Activated B cell treated with CpG ODN at 0.5 μM for 24 hours (primary cell): ENCODE measurements at regions of chr12 and their contacts with region 1.

Region 1: DNA sequence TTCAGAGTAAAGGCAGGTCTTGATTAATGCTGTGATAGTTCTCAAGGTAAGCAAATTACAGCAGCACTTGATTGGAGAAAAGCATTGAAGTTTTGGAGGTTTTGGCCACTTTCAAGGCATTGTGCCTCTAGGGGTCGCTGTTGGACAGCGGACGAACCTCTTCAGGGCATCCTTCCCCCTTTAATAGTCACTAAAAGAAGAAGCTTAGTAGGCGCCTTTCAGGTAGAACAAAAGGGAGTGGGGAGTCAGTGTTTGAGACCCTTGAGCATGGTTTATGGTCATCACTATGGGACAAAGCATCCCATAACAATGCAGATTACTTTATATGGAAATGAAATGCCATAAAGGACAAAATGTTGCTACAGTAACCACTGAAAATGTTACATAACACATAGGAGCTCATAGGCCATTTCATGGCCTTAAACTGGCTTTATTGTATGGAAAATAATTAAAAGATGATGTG is 199.5 kb upstream of the DCN start:
- DNase-seq: peak; percentile 63
- ATAC-seq: peak; percentile 78
- H3K4me3 Mint-ChIP-seq: peak overlapping the region; percentile 76
- H3K27ac Mint-ChIP-seq: peak overlapping the region; percentile 35
- H3K4me1 Mint-ChIP-seq: peaks cover 4% of the 10 kb centered on the region
- H3K27me3 Mint-ChIP-seq: no peaks in the 10 kb centered on the region
- CTCF ChIP-seq: peak; percentile 62

Region 2: DNA sequence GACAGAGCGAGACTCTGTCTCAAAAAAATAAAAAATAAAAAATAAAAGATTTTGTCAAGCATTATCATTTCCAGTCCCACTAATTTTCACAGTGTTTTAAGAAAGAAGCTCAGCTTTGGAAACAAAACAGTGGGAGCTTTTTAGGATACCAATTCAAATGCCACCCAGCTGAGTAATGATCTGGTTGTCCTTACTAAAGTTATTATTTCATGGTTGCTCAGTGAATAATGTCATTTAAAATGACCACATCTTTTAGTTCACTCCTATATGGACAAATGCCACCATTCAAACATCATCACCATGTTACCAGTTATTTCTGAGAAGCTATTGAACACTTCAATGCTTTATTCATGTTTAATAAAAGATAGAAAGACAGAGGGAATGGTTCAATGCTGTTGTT is 792.2 kb before region 1 on chr12:
- CTCF ChIA-PET with region 1: no interaction called
- POLR2A ChIA-PET with region 1: no interaction called
- intact Hi-C with region 1: no loop called
- DNase-seq: no peak
- ATAC-seq: no peak
- H3K4me3 Mint-ChIP-seq: no peak overlapping the region
- H3K27ac Mint-ChIP-seq: no peak overlapping the region
- H3K4me1 Mint-ChIP-seq: no peaks in the 10 kb centered on the region
- H3K27me3 Mint-ChIP-seq: no peaks in the 10 kb centered on the region
- CTCF ChIP-seq: no peak

Region 3: GRCh38 chr12:91396293-91396692 is 14.2 kb after region 1 on chr12:
- CTCF ChIA-PET with region 1: interaction called, 11 read pairs
- POLR2A ChIA-PET with region 1: no interaction called
- intact Hi-C with region 1: no loop called
- DNase-seq: no peak
- ATAC-seq: no peak
- H3K4me3 Mint-ChIP-seq: no peak overlapping the region
- H3K27ac Mint-ChIP-seq: no peak overlapping the region
- H3K4me1 Mint-ChIP-seq: no peaks in the 10 kb centered on the region
- H3K27me3 Mint-ChIP-seq: peaks cover 20% of the 10 kb centered on the region
- CTCF ChIP-seq: no peak

Region 4: DNA sequence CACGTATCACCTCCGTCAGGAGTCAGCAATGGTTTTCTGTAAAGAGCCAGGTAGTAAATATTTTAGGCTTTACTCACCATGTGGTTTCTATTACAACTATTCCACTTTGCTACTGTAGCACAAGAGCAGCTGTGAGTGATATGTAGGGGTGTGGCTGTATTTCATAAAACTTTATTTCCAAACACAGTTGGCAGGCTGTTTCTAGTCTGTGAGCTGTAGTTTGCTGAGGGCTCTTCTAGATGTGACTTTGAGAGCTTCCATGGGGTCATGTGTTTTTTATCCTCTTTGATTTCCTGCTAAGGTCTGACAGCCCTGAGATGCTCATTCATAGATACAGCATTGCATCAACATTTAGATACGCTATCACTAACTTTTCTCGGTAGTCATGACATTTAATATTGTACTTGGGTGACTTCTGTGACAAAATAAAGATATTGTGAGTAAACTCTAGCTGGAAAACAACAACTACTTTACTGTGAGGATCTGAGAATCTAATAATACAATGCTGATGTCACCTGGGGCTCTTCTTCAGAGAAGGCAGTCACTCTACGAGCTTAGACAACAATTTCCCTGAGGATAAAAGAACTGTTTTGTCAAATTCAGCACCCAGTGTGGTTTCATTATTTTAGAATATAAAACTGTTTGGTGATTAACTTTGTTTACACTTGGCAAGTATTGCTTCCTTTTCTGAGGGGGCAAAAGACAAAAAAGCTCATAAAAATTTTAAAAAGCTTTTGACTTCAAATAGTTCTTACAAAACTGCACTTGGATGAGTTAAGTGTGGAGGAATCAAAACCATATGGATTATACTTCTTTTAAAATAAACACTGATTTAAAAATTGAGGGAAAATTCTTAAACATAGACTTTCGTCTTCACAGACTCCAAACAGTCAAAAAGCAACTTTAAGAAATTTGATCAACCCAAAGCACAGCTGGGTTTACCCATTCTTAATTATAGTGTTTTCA is 31.8 kb after region 1 on chr12:
- CTCF ChIA-PET with region 1: no interaction called
- POLR2A ChIA-PET with region 1: no interaction called
- intact Hi-C with region 1: no loop called
- DNase-seq: no peak
- ATAC-seq: no peak
- H3K4me3 Mint-ChIP-seq: no peak overlapping the region
- H3K27ac Mint-ChIP-seq: no peak overlapping the region
- H3K4me1 Mint-ChIP-seq: no peaks in the 10 kb centered on the region
- H3K27me3 Mint-ChIP-seq: peaks cover 18% of the 10 kb centered on the region
- CTCF ChIP-seq: no peak

Region 5: GRCh38 chr12:91763654-91764370 is 381.7 kb after region 1 on chr12:
- CTCF ChIA-PET with region 1: no interaction called
- POLR2A ChIA-PET with region 1: no interaction called
- intact Hi-C with region 1: no loop called
- DNase-seq: no peak
- ATAC-seq: no peak
- H3K4me3 Mint-ChIP-seq: no peak overlapping the region
- H3K27ac Mint-ChIP-seq: no peak overlapping the region
- H3K4me1 Mint-ChIP-seq: no peaks in the 10 kb centered on the region
- H3K27me3 Mint-ChIP-seq: peaks cover 15% of the 10 kb centered on the region
- CTCF ChIP-seq: no peak

Region 6: DNA sequence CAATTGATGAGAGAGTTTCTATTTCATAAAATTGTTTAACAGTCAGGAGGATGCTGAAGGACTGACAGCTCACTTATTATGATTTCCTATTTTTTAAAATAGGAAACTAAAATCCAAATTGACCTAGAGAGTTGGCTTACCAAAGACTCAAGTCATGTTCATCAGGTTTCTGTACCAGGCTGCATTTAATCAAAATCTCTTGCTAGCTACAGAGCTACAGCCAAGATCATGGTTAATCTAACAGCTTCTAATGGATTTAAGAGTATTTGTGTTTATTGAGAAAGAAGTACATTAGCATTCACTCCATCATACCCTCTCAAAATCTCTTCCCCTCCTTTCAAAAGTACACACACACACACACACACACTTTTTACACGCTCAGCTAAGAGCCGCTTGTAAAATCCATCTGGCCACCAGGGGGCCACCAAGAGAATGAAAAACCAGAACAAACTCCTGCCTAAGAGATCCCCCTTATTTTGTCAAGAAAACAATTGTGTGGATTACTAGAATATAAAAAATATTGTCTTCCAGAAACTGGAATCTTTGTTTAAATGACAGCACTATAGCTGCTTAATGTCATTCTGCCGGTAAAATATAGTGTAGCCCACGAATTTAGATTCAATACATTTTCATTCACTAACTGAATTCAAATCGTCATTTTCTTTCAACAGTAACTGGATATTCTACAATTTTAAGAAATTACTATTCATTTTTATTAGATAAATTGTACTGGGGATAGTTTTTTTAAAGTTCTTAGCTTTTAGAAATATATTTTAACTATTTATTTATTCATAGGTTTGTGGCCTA is 429.6 kb after region 1 on chr12:
- CTCF ChIA-PET with region 1: interaction called, 16 read pairs
- POLR2A ChIA-PET with region 1: no interaction called
- intact Hi-C with region 1: loop called (anchors 1 kb)
- DNase-seq: peak; percentile 57
- ATAC-seq: peak; percentile 71
- H3K4me3 Mint-ChIP-seq: no peak overlapping the region
- H3K27ac Mint-ChIP-seq: no peak overlapping the region
- H3K4me1 Mint-ChIP-seq: peaks cover 7% of the 10 kb centered on the region
- H3K27me3 Mint-ChIP-seq: no peaks in the 10 kb centered on the region
- CTCF ChIP-seq: no peak

Region 7: DNA sequence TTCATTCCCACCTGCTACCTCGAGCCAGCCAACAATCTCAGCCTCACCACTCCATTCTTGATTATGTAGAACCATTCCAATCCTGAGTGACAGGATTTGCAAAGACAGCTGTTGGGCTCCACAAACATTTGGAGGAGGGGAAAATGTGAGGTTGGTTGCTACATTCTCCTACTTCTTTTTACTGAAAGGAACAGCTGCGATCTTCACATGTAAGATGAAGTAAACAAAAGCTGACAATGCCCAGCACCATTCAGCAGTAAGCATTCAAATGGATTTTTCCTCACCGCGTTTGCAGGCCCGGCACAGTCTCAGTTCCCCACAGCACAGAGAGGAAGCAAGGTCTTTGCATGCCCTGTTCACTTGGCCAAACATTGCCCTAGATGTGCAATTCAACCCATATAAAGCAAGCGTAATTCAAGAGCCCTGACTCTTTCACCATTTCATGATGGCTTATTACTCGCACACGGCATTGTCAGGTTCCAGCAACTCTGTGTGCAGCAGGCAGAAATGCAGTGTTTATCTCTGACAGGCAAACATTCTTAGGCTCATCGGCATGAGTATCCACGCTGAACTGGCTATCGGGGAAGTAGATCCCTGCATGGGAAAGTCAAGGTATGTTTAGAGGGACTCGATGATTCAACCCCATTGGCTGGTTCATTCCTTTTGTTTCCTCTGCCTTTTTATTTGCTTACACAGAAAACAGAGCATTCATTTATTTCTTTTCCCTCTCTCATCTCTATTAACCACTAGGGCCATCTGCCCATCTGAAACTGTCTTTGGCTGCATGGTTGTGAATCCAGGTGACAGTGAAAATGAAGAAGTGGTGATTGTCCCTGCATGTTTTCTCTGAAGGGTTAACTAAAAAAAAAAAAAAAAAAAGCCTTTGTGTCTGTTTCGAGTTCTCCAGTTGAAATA is 1084.5 kb after region 1 on chr12:
- CTCF ChIA-PET with region 1: no interaction called
- POLR2A ChIA-PET with region 1: no interaction called
- intact Hi-C with region 1: loop called (anchors 10 kb)
- DNase-seq: peak; percentile 51
- ATAC-seq: peak; percentile 74
- H3K4me3 Mint-ChIP-seq: peak overlapping the region; percentile 93
- H3K27ac Mint-ChIP-seq: peak overlapping the region; percentile 99
- H3K4me1 Mint-ChIP-seq: peaks cover 94% of the 10 kb centered on the region
- H3K27me3 Mint-ChIP-seq: no peaks in the 10 kb centered on the region
- CTCF ChIP-seq: no peak

Region 8: GRCh38 chr12:92649511-92650227 is 1267.6 kb after region 1 on chr12:
- CTCF ChIA-PET with region 1: interaction called, 41 read pairs
- POLR2A ChIA-PET with region 1: no interaction called
- intact Hi-C with region 1: loop called (anchors 1 kb)
- DNase-seq: no peak
- ATAC-seq: peak; percentile 78
- H3K4me3 Mint-ChIP-seq: no peak overlapping the region
- H3K27ac Mint-ChIP-seq: no peak overlapping the region
- H3K4me1 Mint-ChIP-seq: peaks cover 6% of the 10 kb centered on the region
- H3K27me3 Mint-ChIP-seq: no peaks in the 10 kb centered on the region
- CTCF ChIP-seq: peak; percentile 26